ENCODE measurements at regions of chr20 and their contacts with region 1.

Region 1: DNA sequence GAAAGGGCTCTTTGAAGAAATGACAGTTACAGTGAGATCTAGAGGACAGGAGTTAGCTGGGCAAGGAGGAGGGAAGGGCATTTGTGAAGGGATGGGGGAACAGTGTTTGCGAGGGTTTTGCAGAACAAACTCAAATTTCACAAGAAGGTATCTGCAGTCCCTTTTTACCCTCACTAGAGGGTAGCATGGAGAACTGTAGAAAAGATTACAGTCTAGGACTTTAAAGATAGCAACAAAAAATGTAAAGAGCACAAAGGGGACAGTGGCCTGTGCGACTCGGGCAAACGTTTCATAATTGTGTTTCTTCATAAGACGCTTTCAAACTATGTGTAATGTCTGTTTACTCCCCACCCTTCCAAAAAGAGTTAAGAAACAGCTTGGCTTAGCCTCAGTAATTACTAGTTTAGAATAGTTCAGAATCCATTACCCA is 21.2 kb upstream of the ASXL1 start:
- DNase-seq: peak; percentile 56
- ATAC-seq: peak; percentile 66
- H3K4me3 ChIP-seq: no peak overlapping the region
- H3K4me3 Mint-ChIP-seq: no peak overlapping the region
- H3K27ac ChIP-seq: no peak overlapping the region
- H3K27ac Mint-ChIP-seq: peak overlapping the region; percentile 83
- H3K4me1 ChIP-seq: peaks cover 4 to 26% of the 10 kb centered on the region in 2 donors
- H3K4me1 Mint-ChIP-seq: peaks cover 38% of the 10 kb centered on the region
- H3K27me3 ChIP-seq: no peaks in the 10 kb centered on the region
- H3K27me3 Mint-ChIP-seq: no peaks in the 10 kb centered on the region
- CTCF ChIP-seq: peak; percentile 74

Region 2: DNA sequence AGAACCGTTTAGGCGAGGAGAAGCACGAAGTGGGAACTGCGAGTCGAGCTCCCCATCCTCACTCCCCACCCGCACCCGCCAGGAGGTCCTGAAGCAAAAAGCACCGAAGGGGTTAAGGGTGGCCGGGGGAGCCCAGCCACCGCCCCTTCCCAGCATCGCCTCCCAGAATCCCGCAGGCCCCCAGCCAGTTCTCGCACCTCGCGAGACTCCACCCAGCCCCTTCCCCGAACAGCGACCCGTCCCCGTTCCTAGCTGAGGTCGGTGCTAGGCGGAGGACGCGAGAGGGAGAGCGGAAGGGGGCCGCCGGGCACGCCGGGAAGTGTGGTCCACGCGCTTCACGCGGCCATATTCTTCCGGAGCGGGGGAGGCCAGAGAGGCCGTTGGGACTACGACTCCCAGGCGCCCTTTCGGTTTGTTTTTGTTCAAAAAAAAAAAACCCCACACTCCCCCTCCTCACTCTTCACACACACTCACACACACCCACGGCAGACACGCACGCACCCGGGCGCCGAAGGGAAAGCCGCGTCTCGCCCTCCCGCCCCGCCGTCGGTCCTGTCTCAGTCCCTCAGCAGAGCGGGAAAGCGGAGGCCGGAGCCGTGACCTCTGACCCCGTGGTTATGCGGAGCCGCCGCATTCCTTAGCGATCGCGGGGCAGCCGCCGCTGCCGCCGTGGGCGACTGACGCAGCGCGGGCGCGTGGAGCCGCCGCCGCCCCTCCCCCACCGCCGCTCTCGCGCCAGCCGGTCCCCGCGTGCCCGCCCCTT is 21.1 kb after region 1 on chr20 and contains the start of gene ASXL1:
- CTCF ChIA-PET with region 1: interaction called, 13 read pairs
- POLR2A ChIA-PET with region 1: interaction called, 4 read pairs
- intact Hi-C with region 1: loop called (anchors 1 kb)
- DNase-seq: peak; percentile 96
- ATAC-seq: peak; percentile 83
- H3K4me3 ChIP-seq: peak within 1 kb of the TSS; percentile 83 to 95 (median 91)
- H3K4me3 Mint-ChIP-seq: peak within 1 kb of the TSS; percentile 95
- H3K27ac ChIP-seq: peak within 1 kb of the TSS; percentile 96 to 97
- H3K27ac Mint-ChIP-seq: peak within 1 kb of the TSS; percentile 98
- H3K4me1 ChIP-seq: peaks cover 47 to 71% of the 10 kb centered on the region in 2 donors
- H3K4me1 Mint-ChIP-seq: peaks cover 71% of the 10 kb centered on the region
- H3K27me3 ChIP-seq: no peaks in the 10 kb centered on the region
- H3K27me3 Mint-ChIP-seq: no peaks in the 10 kb centered on the region
- CTCF ChIP-seq: no peak
- total RNA-seq, gene ASXL1: 180 and 183 TPM in 2 replicates

Region 3: GRCh38 chr20:32456869-32457478 is 120.0 kb after region 1 on chr20:
- CTCF ChIA-PET with region 1: interaction called, 4 read pairs
- POLR2A ChIA-PET with region 1: no interaction called
- intact Hi-C with region 1: loop called (anchors 1 kb)
- DNase-seq: peak; percentile 56
- ATAC-seq: peak; percentile 60
- H3K4me3 ChIP-seq: no peak overlapping the region
- H3K4me3 Mint-ChIP-seq: no peak overlapping the region
- H3K27ac ChIP-seq: no peak overlapping the region
- H3K27ac Mint-ChIP-seq: no peak overlapping the region
- H3K4me1 ChIP-seq: peaks cover 0 to 13% of the 10 kb centered on the region in 2 donors
- H3K4me1 Mint-ChIP-seq: peaks cover 12% of the 10 kb centered on the region
- H3K27me3 ChIP-seq: no peaks in the 10 kb centered on the region
- H3K27me3 Mint-ChIP-seq: no peaks in the 10 kb centered on the region
- CTCF ChIP-seq: peak; percentile 79

Region 4: DNA sequence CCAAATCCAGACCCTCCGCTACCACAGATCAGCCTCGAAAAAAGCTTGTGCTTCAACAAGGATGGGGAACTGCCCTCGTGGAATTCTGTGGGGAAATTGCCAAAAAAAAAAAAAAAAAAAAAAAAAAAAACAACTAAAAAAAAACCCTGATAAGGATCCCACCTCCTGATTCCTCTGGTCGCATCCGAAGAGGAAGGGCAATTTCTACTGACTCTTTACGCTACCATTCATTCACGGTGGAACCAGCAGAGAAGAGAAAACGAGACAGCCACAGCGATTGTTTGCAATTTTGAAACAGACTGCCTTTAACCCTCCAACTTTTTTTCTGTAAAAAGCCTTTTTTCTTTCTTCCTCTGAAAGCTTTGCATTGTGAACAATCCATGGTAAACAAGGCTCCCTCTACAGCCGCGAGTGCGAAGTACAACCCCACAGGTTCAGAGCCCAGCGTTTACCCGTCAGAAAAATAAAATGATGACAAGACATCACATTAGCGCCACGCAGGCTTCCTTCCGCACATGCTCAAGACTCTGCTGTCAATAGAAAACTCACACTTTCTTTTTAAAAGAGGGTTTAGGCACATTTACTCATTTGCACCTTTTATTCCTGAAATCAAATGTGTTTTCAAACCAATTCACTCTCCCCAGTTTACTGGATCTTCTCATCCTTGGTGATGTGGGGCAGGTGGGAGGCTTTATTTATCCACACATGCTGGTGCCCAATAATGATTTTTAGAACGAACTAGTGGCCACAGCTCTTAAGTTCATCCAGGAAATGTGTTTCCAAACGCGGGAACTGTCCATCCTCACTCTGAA is 148.2 kb after region 1 on chr20:
- CTCF ChIA-PET with region 1: interaction called, 3 read pairs
- POLR2A ChIA-PET with region 1: no interaction called
- intact Hi-C with region 1: loop called (anchors 1 kb)
- DNase-seq: peak; percentile 80
- ATAC-seq: peak; percentile 82
- H3K4me3 ChIP-seq: peak overlapping the region; percentile 45 to 69 (median 61)
- H3K4me3 Mint-ChIP-seq: peak overlapping the region; percentile 97
- H3K27ac ChIP-seq: no peak overlapping the region
- H3K27ac Mint-ChIP-seq: peak overlapping the region; percentile 89
- H3K4me1 ChIP-seq: peaks cover 14 to 23% of the 10 kb centered on the region in 2 donors
- H3K4me1 Mint-ChIP-seq: peaks cover 14% of the 10 kb centered on the region
- H3K27me3 ChIP-seq: peaks cover 0 to 10% (median 2%) of the 10 kb centered on the region in 4 experiments
- H3K27me3 Mint-ChIP-seq: peaks cover 5% of the 10 kb centered on the region
- CTCF ChIP-seq: peak; percentile 81

Region 5: DNA sequence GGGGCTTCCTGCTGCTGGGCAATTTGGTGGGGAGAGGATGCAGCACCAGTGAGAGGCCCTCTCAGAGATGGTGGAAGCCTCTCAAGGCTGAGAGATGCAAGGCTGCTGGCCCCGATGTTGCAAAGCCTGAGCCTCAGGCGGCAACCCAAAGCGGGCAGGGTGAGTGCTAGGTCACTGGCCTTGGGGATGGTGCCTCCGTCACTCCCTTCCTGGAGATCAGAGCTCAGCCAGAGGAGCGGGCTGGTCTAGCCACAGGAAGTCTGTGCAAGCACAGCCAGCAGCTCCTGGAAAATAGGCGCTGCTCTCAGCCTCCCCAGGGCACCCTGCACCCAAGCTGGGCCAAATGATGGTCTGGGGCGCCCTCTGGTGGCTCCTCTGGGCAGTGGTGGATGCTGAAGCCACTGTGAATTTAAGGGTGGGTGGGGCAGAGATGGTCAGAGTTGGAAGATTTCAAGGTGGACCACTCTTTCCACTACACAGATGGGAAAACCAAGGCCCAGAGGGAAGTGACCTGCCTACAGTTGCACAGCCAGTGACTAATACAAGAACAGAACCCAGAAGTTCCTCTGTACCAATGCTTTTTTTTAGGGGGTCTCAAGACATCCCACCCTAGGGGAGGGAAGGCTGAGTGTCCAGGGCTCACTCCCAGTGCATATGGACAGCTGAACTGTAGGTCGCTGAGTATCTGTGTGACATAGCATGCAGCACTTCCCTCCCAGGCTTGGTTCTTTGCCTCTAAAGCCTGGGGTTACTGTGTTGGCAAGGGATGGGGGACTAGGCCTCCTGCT is 316.0 kb after region 1 on chr20:
- CTCF ChIA-PET with region 1: interaction called, 4 read pairs
- POLR2A ChIA-PET with region 1: no interaction called
- intact Hi-C with region 1: loop called (anchors 2 kb)
- DNase-seq: peak; percentile 84
- ATAC-seq: peak; percentile 96
- H3K4me3 ChIP-seq: no peak overlapping the region
- H3K4me3 Mint-ChIP-seq: no peak overlapping the region
- H3K27ac ChIP-seq: no peak overlapping the region
- H3K27ac Mint-ChIP-seq: no peak overlapping the region
- H3K4me1 ChIP-seq: peaks cover 4 to 7% of the 10 kb centered on the region in 2 donors
- H3K4me1 Mint-ChIP-seq: peaks cover 9% of the 10 kb centered on the region
- H3K27me3 ChIP-seq: peaks cover 0 to 4% (median 0%) of the 10 kb centered on the region in 4 experiments
- H3K27me3 Mint-ChIP-seq: peaks cover 5% of the 10 kb centered on the region
- CTCF ChIP-seq: peak; percentile 97

Measured in B cell (primary cell).